ENCODE measurements at regions of chr7 and their contacts with region 1.

Region 1: GRCh38 chr7:112481833-112482670 is 1.3 kb downstream of the LSMEM1 start:
- DNase-seq: peak; percentile 89
- H3K4me3 ChIP-seq: no peak overlapping the region
- H3K27ac ChIP-seq: peak overlapping the region; percentile 17
- H3K4me1 ChIP-seq: peaks cover 28% of the 10 kb centered on the region
- H3K27me3 ChIP-seq: no peaks in the 10 kb centered on the region
- CTCF ChIP-seq: no peak

Region 2: DNA sequence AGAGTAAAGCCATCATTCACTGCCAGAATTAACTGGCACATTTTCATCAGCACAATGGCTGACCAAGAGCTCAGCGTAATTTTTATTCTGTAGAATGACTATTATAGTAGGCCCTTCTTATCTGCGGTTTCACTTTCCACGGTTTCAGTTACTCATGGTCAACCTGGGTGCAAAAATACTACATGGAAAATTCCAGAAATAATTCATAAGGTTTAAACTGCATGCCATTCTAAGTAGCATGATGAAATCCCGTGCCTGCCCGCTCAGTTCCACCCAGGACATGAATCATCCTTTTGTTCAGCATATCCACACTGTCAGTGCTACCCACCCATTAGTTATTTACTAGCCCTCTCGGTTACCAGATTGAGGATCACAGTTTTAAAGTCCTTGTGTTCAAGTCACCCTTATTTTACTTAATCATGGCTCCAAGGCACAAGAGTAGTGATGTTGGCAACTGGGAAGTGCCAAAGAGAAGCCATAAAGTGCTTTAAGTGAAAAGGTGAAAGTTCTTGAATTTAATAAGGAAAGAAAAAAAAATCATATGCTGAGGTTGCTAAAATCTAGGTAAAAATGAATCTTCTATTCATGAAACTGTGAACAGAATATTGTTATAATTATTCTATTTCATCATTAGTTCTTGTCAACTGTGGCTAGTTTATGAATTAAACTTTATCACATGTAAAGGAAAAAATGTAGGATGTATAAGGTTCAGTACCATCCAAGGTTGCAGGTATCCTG is 480.8 kb before region 1 on chr7:
- CTCF ChIA-PET with region 1: no interaction called
- dilution Hi-C with region 1: no loop called
- in situ Hi-C with region 1: no loop called
- intact Hi-C with region 1: no loop called
- DNase-seq: peak; percentile 92
- H3K4me3 ChIP-seq: peak overlapping the region in 2 of 3 experiments; percentile 10 to 16
- H3K27ac ChIP-seq: peak overlapping the region; percentile 91
- H3K4me1 ChIP-seq: peaks cover 15% of the 10 kb centered on the region
- H3K27me3 ChIP-seq: no peaks in the 10 kb centered on the region
- CTCF ChIP-seq: no peak

Region 3: DNA sequence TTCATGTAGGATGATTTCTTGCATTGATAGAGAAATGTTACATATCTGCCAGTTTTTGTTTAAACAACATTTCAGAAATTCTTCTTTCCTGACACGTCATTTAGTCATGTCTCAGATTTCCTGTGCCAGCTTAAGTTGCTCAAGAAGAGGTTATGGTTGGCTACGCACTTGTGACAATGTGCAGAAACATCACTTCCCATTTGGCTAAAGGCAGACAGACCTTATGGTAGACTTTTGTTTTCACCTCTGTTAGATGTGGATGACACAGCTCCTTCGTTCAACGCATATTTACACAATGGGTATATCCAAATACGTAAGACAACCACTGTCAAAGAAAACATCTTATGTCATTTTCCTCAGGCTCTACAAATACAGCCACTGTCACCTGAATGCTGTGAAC is 401.6 kb before region 1 on chr7:
- CTCF ChIA-PET with region 1: no interaction called
- dilution Hi-C with region 1: no loop called
- in situ Hi-C with region 1: no loop called
- intact Hi-C with region 1: no loop called
- DNase-seq: peak; percentile 73
- H3K4me3 ChIP-seq: no peak overlapping the region
- H3K27ac ChIP-seq: peak overlapping the region; percentile 23
- H3K4me1 ChIP-seq: peaks cover 24% of the 10 kb centered on the region
- H3K27me3 ChIP-seq: no peaks in the 10 kb centered on the region
- CTCF ChIP-seq: no peak

Region 4: DNA sequence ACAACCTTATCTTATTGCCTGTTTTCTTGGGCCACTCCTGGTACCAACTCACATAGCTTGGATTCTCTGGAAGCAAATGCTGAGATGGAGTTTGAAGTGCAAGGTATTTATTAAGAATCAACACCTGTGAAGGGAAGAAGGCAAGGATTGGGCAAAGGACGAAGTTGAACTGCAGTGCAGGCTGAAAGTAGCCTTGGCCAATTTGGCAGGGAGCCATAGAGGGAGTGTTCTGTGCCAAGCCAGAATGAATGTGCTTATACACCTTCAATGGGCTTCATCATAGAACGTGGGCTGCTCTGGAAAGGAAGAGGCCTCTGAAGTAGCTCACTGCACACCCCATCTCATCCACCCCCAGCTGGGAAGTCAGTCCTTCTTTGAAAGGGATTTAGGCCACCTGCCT is 111.6 kb before region 1 on chr7:
- CTCF ChIA-PET with region 1: no interaction called
- dilution Hi-C with region 1: no loop called
- in situ Hi-C with region 1: no loop called
- intact Hi-C with region 1: no loop called
- DNase-seq: peak; percentile 17
- H3K4me3 ChIP-seq: no peak overlapping the region
- H3K27ac ChIP-seq: no peak overlapping the region
- H3K4me1 ChIP-seq: no peaks in the 10 kb centered on the region
- H3K27me3 ChIP-seq: no peaks in the 10 kb centered on the region
- CTCF ChIP-seq: no peak

Region 5: GRCh38 chr7:112495810-112496462 is 13.9 kb after region 1 on chr7:
- CTCF ChIA-PET with region 1: interaction called, 4 read pairs
- dilution Hi-C with region 1: no loop called
- in situ Hi-C with region 1: no loop called
- intact Hi-C with region 1: loop called (anchors 1 kb)
- DNase-seq: peak; percentile 64
- H3K4me3 ChIP-seq: no peak overlapping the region
- H3K27ac ChIP-seq: no peak overlapping the region
- H3K4me1 ChIP-seq: peaks cover 4% of the 10 kb centered on the region
- H3K27me3 ChIP-seq: no peaks in the 10 kb centered on the region
- CTCF ChIP-seq: peak; percentile 57 to 77

Region 6: GRCh38 chr7:112584290-112584689 is 102.2 kb after region 1 on chr7:
- CTCF ChIA-PET with region 1: no interaction called
- dilution Hi-C with region 1: no loop called
- in situ Hi-C with region 1: no loop called
- intact Hi-C with region 1: no loop called
- DNase-seq: peak; percentile 69
- H3K4me3 ChIP-seq: peak overlapping the region in 1 of 3 experiments; percentile 5
- H3K27ac ChIP-seq: peak overlapping the region; percentile 14
- H3K4me1 ChIP-seq: peaks cover 5% of the 10 kb centered on the region
- H3K27me3 ChIP-seq: no peaks in the 10 kb centered on the region
- CTCF ChIP-seq: no peak